Caco-2 (cell line): ENCODE measurements at regions of chr3 and their contacts with region 1.

Region 1: DNA sequence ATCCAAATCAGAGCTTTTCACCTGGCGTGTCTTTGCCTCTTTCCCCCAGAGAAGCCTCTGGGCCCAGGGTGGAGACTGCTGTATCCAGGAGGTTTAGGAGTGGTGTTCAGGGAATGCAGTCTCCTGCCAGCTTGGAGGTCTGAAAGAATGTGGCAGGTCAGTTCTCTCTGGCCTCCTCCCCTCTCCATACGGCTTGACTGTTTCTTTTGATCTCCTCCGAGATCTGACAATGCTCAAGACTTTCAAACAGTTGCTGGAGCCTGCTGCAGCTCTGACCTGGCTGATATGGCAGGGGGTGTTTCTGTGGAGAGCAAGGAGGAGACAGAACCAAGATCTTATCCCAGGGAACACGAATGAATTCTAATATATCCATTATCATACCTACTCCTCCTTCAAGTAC is 24.7 kb upstream of the TM4SF4 start:
- DNase-seq: peak; percentile 48 to 68
- H3K4me3 ChIP-seq: no peak overlapping the region
- H3K4me3 Mint-ChIP-seq: no peak overlapping the region
- H3K27ac Mint-ChIP-seq: peak overlapping the region; percentile 81
- H3K4me1 ChIP-seq: 0 out of 2 replicates have a peak, but pooled peaks cover 6% of the 10 kb centered on the region
- H3K4me1 Mint-ChIP-seq: peaks cover 11% of the 10 kb centered on the region
- H3K27me3 ChIP-seq: no peaks in the 10 kb centered on the region
- H3K27me3 Mint-ChIP-seq: no peaks in the 10 kb centered on the region
- CTCF ChIP-seq: no peak

Region 2: DNA sequence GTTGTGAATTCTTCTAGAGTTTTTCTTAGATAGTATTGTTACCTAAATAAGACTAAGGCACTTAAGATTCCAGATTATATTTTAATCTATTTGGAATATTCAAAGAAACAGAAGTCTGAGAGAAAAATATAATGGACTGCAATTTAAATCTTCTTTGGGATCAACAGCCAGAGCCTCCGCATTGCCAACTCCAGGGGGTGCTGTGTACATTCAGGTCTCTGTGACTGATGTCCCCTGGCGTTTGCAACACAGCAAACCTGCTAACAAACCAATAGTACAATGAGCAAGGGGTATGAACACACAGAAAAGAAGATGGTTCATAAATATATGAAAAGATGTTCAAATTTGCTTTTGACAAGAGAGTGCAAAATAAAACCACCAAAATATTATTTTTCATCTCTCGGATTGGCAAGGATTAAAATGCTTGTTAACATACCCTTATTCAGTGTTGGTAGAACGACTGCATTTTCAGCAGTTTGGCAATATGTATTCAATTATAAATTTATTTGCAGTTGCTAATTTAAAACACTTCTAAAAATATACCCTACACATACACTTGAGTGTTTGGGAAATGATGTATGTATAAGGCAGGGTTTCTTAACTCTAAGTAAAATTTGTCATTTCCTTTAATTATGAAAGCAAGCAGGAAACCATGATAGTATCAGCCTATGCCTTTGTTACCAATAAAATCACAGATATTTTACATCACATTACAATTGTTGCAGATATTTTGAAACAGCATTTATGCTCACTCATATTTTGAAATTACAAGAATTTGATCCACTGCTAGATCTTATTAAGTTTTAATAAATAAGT is 56.2 kb before region 1 on chr3:
- CTCF ChIA-PET with region 1: no interaction called
- POLR2A ChIA-PET with region 1: no interaction called
- intact Hi-C with region 1: loop called (anchors 2 kb)
- DNase-seq: peak; percentile 76 to 82
- H3K4me3 ChIP-seq: no peak overlapping the region
- H3K4me3 Mint-ChIP-seq: no peak overlapping the region
- H3K27ac Mint-ChIP-seq: no peak overlapping the region
- H3K4me1 ChIP-seq: peaks cover 17% of the 10 kb centered on the region
- H3K4me1 Mint-ChIP-seq: peaks cover 29% of the 10 kb centered on the region
- H3K27me3 ChIP-seq: no peaks in the 10 kb centered on the region
- H3K27me3 Mint-ChIP-seq: no peaks in the 10 kb centered on the region
- CTCF ChIP-seq: peak; percentile 90 to 97